Endothelial cell of umbilical vein (primary cell): ENCODE measurements at regions of chr6 and their contacts with region 1.

Region 1: GRCh38 chr6:22145823-22146677 is 150.8 kb downstream of the PRL start:
- DNase-seq: peak; percentile 69
- H3K4me3 ChIP-seq: no peak overlapping the region
- H3K27ac ChIP-seq: no peak overlapping the region
- H3K4me1 ChIP-seq: peaks cover 36% of the 10 kb centered on the region
- H3K27me3 ChIP-seq: no peaks in the 10 kb centered on the region
- CTCF ChIP-seq: no peak
- POLR2A ChIP-seq: no peak

Region 2: DNA sequence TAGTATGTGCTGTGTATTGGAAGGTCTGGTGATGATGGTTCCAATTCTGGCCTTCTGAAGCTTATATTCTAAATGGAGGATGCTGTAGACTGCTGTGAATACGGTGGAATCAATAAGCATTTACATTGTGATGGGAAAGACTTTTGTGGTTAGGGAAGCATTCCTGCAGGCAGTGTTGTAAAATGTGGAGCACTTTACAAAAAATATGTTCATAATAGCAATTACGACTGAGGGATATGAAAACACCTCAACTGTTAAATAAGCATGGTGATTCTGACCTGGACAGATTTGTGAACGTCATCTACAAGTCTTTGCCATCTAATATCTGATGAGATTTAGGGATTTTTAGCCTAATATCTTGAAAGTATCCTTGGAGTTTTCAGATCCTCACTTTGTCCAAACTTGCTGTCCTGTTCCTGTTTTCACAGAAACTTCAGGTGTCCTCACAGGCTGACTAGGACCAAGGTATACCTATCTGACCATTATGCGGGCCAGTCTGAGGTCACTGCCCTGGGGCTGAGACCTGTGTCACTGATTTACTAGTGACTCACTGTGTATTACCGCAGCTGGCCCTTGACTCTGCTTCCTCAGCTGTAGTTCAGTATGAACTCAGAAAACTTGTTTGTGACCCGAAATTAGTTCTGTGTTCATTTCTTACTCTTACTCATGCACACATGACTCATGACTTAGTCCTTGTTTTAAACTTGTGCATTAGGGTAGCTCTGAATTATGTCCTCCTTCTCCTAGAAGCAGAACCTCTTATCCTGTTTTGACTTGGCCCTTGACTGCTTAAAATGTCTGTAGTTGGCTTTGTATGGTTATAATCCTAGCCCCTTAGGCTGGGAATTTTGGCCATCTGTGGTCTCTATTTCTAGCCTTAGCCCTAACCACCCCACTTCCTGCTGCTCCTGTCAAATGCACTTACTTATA is 1268.8 kb before region 1 on chr6:
- CTCF ChIA-PET with region 1: no interaction called
- POLR2A ChIA-PET with region 1: no interaction called
- dilution Hi-C with region 1: no loop called
- intact Hi-C with region 1: loop called (anchors 5 kb)
- DNase-seq: peak; percentile 94
- H3K4me3 ChIP-seq: no peak overlapping the region
- H3K27ac ChIP-seq: peak overlapping the region; percentile 85
- H3K4me1 ChIP-seq: peaks cover 38% of the 10 kb centered on the region
- H3K27me3 ChIP-seq: no peaks in the 10 kb centered on the region
- CTCF ChIP-seq: no peak
- POLR2A ChIP-seq: peak; percentile 8

Region 3: DNA sequence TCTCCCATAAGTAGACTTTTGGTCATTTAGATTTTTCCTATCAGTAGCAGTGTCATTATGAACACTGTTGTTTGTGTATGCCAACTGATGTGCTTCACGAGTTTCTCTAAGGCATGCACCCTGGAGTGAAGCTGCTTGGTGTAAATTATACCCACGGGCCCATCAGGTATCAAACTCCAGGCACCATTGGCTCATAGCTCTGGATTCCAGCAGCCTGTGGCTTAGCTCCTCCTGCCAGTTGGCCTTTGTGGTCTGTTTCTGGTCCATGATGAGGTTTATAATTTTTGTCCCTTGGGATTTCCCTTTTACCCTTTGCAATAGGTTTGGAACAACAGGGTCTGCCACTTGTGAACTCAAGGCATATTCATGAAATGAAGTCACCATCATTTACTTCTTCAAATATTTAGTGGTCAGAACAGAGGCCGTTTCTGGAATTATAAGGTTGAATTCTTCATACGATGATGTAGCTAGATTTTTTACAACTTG is 199.7 kb before region 1 on chr6:
- CTCF ChIA-PET with region 1: no interaction called
- POLR2A ChIA-PET with region 1: no interaction called
- dilution Hi-C with region 1: no loop called
- intact Hi-C with region 1: loop called (anchors 5 kb)
- DNase-seq: no peak
- H3K4me3 ChIP-seq: no peak overlapping the region
- H3K27ac ChIP-seq: no peak overlapping the region
- H3K4me1 ChIP-seq: peaks cover 51% of the 10 kb centered on the region
- H3K27me3 ChIP-seq: no peaks in the 10 kb centered on the region
- CTCF ChIP-seq: no peak
- POLR2A ChIP-seq: no peak

Region 4: GRCh38 chr6:22025468-22026160 is 120.4 kb before region 1 on chr6:
- CTCF ChIA-PET with region 1: no interaction called
- POLR2A ChIA-PET with region 1: no interaction called
- dilution Hi-C with region 1: no loop called
- intact Hi-C with region 1: loop called (anchors 2 kb)
- DNase-seq: peak; percentile 95
- H3K4me3 ChIP-seq: no peak overlapping the region
- H3K27ac ChIP-seq: peak overlapping the region; percentile 86
- H3K4me1 ChIP-seq: peaks cover 16% of the 10 kb centered on the region
- H3K27me3 ChIP-seq: no peaks in the 10 kb centered on the region
- CTCF ChIP-seq: no peak
- POLR2A ChIP-seq: no peak

Region 5: GRCh38 chr6:22221630-22222029 is 75.6 kb after region 1 on chr6:
- CTCF ChIA-PET with region 1: no interaction called
- POLR2A ChIA-PET with region 1: interaction called, 10 read pairs
- dilution Hi-C with region 1: no loop called
- intact Hi-C with region 1: no loop called
- DNase-seq: no peak
- H3K4me3 ChIP-seq: no peak overlapping the region
- H3K27ac ChIP-seq: no peak overlapping the region
- H3K4me1 ChIP-seq: no peaks in the 10 kb centered on the region
- H3K27me3 ChIP-seq: no peaks in the 10 kb centered on the region
- CTCF ChIP-seq: no peak
- POLR2A ChIP-seq: no peak

Region 6: DNA sequence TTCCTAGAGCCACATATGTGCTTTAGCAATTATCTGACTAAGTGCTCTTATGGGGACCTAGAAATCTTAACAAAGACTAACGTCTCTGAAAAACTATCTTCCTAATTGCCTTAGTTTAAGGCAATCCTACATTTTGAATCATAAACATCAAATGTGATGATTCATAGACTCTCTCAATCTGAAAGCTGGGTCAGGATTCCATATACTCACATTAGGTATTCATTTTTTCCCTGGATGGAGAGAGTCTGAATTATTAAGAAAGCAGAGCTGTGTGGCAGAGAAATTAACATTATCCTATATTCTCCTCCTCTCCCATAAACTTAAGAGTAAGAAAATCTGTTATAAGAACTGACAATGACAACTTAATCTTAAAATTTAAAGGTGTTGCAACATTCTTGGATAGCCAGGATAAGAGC is 152.4 kb after region 1 on chr6:
- CTCF ChIA-PET with region 1: no interaction called
- POLR2A ChIA-PET with region 1: no interaction called
- dilution Hi-C with region 1: no loop called
- intact Hi-C with region 1: no loop called
- DNase-seq: no peak
- H3K4me3 ChIP-seq: no peak overlapping the region
- H3K27ac ChIP-seq: no peak overlapping the region
- H3K4me1 ChIP-seq: no peaks in the 10 kb centered on the region
- H3K27me3 ChIP-seq: no peaks in the 10 kb centered on the region
- CTCF ChIP-seq: no peak
- POLR2A ChIP-seq: no peak

Region 7: GRCh38 chr6:22471132-22471690 is 325.2 kb after region 1 on chr6:
- CTCF ChIA-PET with region 1: no interaction called
- POLR2A ChIA-PET with region 1: interaction called, 3 read pairs
- dilution Hi-C with region 1: no loop called
- intact Hi-C with region 1: loop called (anchors 2 kb)
- DNase-seq: peak; percentile 98
- H3K4me3 ChIP-seq: no peak overlapping the region
- H3K27ac ChIP-seq: peak overlapping the region; percentile 56
- H3K4me1 ChIP-seq: peaks cover 27% of the 10 kb centered on the region
- H3K27me3 ChIP-seq: no peaks in the 10 kb centered on the region
- CTCF ChIP-seq: no peak
- POLR2A ChIP-seq: no peak

Region 8: GRCh38 chr6:22880686-22881433 is 734.8 kb after region 1 on chr6:
- CTCF ChIA-PET with region 1: no interaction called
- POLR2A ChIA-PET with region 1: no interaction called
- dilution Hi-C with region 1: no loop called
- intact Hi-C with region 1: loop called (anchors 2 kb)
- DNase-seq: peak; percentile 92
- H3K4me3 ChIP-seq: no peak overlapping the region
- H3K27ac ChIP-seq: peak overlapping the region; percentile 80
- H3K4me1 ChIP-seq: peaks cover 53% of the 10 kb centered on the region
- H3K27me3 ChIP-seq: no peaks in the 10 kb centered on the region
- CTCF ChIP-seq: no peak
- POLR2A ChIP-seq: no peak